Astrocyte of the cerebellum (primary cell): ENCODE measurements at regions of chr1 and their contacts with region 1.

Region 1: GRCh38 chr1:223444437-223444836 is 51.2 kb downstream of the CCDC185 start:
- DNase-seq: no peak
- H3K4me3 ChIP-seq: no peak overlapping the region
- CTCF ChIP-seq: no peak

Region 2: DNA sequence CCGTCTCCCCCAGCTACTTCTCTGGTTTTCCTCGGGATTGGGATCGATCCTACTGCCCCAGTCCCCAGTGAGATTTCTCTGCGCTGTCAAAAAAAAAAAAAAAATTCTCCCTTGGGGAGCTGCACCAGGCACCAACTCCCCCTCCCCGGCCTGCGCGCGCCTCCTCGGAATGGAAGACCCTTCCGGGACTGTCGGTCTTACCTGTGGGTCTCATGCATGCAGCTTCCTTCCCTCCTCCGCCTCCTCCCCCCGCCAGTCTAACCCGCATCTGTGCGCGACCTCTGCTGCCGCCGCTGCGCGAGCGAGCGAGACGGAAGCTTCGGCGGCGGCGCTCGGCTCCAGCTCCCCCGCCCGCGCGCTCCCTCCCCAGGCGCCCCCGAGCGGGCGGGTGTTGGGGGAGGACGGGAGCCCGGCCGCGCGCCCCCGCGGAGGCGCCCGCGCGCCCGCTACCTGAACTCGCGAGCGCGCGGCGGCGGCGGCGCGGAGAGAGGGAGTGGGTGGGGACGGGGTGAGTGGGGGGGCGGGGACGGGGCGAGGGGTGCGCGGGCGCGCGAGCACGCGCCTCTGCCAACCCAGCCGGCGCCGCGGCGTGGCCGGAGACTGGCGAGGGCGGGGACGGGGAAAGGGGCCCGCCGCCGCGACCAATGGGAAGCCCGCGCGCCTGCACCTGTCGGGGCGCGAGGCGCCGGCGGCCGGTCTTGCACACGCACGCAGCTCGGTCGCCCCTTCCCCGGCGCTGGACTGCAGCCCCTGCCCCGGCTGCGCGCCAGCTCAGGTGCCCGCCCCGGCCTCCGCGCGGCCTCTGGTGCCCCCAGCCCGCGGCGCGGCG is 80.4 kb before region 1 on chr1 and contains the start of gene SUSD4:
- in situ Hi-C with region 1: loop called (anchors 5 kb)
- DNase-seq: no peak
- H3K4me3 ChIP-seq: peak within 1 kb of the TSS; percentile 38
- CTCF ChIP-seq: no peak

Region 3: DNA sequence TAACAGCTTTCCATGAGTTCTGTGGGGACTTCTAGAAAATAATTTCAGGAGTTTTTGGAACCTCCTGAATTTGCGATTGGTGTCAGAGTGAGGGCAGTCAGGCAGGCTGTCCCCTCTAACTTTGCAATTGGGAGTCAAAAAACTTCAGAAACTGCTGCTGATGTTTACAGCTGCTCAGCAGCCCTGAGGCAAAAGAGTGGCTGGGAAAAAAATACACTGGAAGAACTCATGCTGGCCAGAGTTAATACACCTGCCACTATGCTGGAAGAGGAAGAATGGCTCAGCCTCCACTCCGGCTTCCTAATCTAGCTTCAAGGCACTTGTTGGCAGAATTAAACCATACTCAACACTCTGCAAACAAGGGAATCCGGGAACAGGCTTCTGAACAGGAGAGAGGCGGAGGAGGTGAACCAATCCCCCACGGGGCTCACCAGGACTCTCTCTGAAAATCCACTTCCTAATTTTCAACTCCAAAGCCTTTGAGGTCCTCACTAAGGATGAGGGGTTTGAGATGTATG is 68.8 kb after region 1 on chr1:
- in situ Hi-C with region 1: no loop called
- DNase-seq: no peak
- H3K4me3 ChIP-seq: no peak overlapping the region
- CTCF ChIP-seq: no peak